ENCODE measurements at regions of chr5 and their contacts with region 1.

Region 1: DNA sequence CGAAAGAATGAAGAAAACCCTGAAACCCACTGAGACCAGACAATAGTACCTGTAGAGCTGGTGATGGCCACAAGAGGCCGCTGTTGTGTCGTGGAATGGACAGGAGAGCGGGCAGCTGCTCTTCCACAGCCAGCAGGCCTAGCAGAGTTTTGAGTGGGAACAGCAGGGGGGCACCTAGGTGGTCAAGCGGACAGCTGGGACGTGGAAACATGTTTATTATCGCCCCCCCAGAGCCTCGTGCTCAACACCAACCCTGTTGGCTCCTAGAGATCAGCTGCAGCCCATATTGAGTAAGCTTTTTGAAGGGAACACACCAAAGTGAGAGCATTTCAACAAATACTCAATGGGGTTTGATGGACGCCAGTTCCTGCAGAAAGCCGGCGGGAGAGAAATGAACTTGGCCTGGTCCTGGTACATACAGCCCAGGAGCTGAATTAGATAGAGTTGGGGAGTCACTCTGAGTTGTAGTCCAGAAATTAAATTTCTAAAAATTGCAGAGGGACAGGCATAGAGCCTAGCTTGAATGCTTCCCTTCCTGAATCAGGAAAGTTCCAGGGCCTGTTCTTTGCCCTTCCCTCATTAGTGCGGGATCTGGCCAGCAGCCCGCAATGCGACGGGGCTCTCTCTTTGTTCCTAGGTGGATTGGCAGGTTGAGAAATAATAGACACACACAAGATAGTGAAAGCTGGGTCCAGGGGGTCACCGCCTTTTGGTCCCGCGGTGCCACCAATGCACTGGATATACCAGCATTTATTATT is 33.8 kb downstream of the MFAP3 start:
- DNase-seq: peak; percentile 53 to 89
- ATAC-seq: peak; percentile 90

Region 2: DNA sequence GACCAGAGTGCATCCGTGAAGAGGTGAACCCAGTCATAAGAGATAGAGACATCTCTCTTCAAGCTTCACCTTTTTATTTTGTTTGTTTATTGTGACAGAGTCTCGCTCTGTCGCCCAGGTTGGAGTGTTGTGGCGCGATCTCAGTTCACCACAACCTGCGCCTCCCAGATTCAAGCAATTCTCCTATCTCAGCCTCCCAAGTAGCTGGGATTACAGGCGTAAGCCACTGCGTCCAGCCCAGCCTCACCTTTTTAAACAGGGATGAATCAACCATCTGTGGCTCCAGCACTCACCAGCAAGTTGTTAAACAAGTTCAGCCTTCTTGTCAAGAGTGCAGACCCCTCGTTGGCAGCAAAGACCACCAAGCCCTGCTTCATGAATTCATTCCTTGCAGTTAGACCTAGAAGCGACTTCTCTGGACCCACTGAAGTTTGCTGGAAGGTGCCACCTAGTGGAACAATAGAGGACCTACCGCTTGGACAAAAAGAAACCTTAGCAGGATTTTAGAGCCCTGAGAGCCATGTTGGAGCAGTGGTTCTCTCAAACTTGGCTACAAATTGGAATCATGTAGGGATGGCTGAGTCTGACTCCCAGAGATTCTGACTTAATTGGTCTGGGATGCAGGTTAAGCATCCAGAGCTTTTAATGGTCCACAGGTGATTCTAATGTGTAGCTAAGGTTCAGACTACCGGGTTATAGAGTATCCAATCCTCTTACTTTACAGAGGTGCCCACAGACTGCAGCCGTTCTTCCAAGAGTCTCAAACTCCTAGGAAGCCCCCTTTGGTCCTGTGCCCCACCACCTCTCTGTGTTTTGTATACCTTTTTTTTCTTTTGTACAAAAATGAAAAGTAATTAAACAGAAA is 107.5 kb after region 1 on chr5:
- intact Hi-C with region 1: loop called in 1 of 2 experiments (anchors 5 kb)
- DNase-seq: no peak
- ATAC-seq: peak; percentile 85

Region 3: GRCh38 chr5:154405078-154405792 is 332.6 kb after region 1 on chr5:
- intact Hi-C with region 1: loop called in 1 of 2 experiments (anchors 5 kb)
- DNase-seq: peak; percentile 71 to 87
- ATAC-seq: peak; percentile 98